ENCODE measurements at regions of chr2 and their contacts with region 1.

Region 1: GRCh38 chr2:142180820-142181535 is 50.2 kb upstream of the LRP1B start:
- DNase-seq: peak; percentile 56 to 84
- H3K4me3 ChIP-seq: no peak overlapping the region
- H3K27ac ChIP-seq: no peak overlapping the region
- H3K4me1 ChIP-seq: 0 out of 7 replicates have a peak, but pooled peaks cover 0 to under 1% (median 0%) of the 10 kb centered on the region in 4 experiments
- H3K27me3 ChIP-seq: no peaks in the 10 kb centered on the region
- CTCF ChIP-seq: peak; percentile 80 to 96 (median 93)
- EP300 ChIP-seq: no peak
- POLR2A ChIP-seq: no peak
- RAD21 ChIP-seq: peak; percentile 58 to 73; a peak in 3 of 4 replicates

Region 2: DNA sequence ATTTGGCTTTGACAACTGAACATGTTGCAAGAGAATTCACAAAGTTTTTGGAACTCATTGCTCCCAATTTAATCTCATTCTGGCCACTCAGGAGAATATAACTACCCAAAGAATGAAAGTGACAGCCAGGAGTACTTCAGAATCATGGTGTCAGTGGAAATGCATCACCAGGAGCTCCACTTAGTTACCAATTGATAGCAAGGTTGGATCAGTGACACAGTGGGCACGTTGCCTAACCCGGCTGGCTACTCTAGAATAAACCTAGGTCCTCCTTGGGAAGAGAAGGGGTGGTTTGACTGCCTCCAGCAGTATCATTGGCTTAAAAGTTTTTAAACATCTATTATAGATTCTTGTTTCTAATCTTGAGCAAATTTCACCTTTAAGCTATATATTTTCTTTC is 10.1 kb before region 1 on chr2:
- CTCF ChIA-PET with region 1: interaction called, 20 read pairs
- POLR2A ChIA-PET with region 1: no interaction called
- DNase-seq: no peak
- H3K4me3 ChIP-seq: no peak overlapping the region
- H3K27ac ChIP-seq: no peak overlapping the region
- H3K4me1 ChIP-seq: no peaks in the 10 kb centered on the region
- H3K27me3 ChIP-seq: no peaks in the 10 kb centered on the region
- CTCF ChIP-seq: no peak
- EP300 ChIP-seq: no peak
- POLR2A ChIP-seq: no peak
- RAD21 ChIP-seq: no peak

Measured in H1 (cell line).